Right ventricle myocardium superior (tissue), 1 donor: ENCODE measurements at regions of chr7 and their contacts with region 1.

Region 1: GRCh38 chr7:519484-520390 is at the start of gene PDGFA:
- DNase-seq: peak; percentile 74
- ATAC-seq: peak; percentile 32
- total RNA-seq, gene PDGFA: 34.5 TPM

Region 2: GRCh38 chr7:332646-333392 is 186.9 kb before region 1 on chr7:
- intact Hi-C with region 1: loop called (anchors 5 kb)
- DNase-seq: peak; percentile 89
- ATAC-seq: peak; percentile 96

Region 3: DNA sequence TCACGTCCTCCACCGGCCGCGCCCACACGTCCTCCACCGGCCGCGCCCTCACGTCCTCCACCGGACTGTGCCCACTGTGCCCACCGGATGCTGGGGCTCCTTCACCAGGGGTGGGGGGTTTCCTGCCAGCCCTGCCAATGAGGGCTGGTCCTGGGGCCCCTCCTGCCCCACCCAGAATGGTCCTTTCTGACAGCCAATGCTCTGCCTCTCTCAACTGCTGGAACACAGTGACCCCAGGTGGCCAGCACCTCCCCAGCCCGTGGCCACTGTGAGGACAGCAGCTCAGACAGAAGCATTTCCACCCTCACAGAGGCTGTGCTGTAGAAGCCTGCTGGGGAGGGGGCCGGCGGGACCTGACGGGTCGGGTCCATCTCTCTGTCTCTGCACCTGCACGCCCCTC is 116.7 kb after region 1 on chr7:
- intact Hi-C with region 1: loop called (anchors 10 kb)
- DNase-seq: no peak
- ATAC-seq: no peak

Region 4: GRCh38 chr7:732094-732541 is 212.4 kb after region 1 on chr7:
- intact Hi-C with region 1: loop called (anchors 5 kb)
- DNase-seq: peak; percentile 70
- ATAC-seq: peak; percentile 87